ENCODE measurements at regions of chr6 and their contacts with region 1.

Region 1: DNA sequence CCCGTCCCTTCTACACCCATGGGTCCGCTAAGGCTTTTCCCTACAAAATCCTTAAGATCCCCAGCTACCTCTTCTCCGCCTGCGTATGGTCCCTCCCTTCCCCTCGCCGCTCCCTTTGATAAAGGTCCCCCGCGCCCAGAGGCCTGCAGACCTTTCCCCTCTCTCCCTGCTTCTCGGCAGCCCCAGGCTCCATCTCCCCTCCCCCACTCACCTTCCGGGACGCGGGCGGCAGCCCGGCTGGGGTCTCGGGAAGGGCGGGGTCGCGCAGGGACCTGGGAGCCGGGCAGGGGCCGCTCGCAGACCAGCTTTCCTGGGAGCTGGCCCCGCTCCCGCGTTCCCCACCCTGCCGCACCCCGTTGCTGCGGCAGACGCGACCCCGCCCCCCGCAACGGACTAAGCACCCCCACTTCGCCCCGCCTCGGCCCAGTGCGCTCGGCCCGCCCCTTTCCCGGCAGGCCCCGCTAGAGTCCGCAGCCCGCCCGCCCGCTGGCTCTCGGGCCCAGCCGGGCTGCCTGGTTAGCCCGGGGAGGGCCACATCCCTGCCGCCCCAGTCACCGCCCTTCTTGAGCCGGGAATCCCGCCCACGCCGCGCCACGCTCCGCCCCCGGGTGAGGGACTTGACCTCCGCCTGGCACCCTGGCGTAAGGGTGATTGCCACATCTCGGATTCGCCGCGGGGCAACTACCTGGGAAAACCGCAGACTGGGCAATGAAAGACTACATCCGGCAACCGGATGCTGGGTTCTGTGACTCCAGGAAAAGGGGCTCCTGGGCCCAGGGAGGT is at the start of gene FLOT1:
- DNase-seq: peak; percentile 99
- H3K4me3 Mint-ChIP-seq: peak within 1 kb of the TSS; percentile 91
- H3K27ac Mint-ChIP-seq: peak within 1 kb of the TSS; percentile 90
- H3K4me1 Mint-ChIP-seq: peaks cover 38% of the 10 kb centered on the region
- H3K27me3 Mint-ChIP-seq: no peaks in the 10 kb centered on the region
- CTCF ChIP-seq: no peak
- total RNA-seq, gene FLOT1: 61.8 and 73.7 TPM in 2 replicates

Region 2: DNA sequence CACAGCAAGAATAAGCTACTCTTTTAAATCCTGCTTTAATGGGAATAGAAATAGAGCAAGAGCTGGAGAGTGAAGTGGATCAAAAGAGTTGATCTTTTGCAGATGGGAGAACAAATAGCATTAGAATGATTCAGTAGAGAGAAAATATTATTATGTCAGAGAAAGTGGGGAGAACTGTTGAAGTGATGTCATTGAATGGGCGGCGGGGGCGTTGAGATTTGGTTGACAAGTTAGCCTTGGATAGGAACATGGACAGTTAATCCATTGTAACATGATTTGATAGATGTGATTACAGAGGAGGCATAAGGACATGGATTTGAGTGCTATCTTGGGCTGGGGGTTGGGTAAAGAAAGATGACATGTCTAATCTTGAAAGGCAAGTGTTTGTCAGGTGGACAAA is 106.7 kb before region 1 on chr6:
- CTCF ChIA-PET with region 1: no interaction called
- POLR2A ChIA-PET with region 1: no interaction called
- intact Hi-C with region 1: no loop called
- DNase-seq: no peak
- H3K4me3 Mint-ChIP-seq: no peak overlapping the region
- H3K27ac Mint-ChIP-seq: no peak overlapping the region
- H3K4me1 Mint-ChIP-seq: no peaks in the 10 kb centered on the region
- H3K27me3 Mint-ChIP-seq: no peaks in the 10 kb centered on the region
- CTCF ChIP-seq: no peak

Region 3: GRCh38 chr6:30686908-30687658 is 55.4 kb before region 1 on chr6:
- CTCF ChIA-PET with region 1: interaction called, 3 read pairs
- POLR2A ChIA-PET with region 1: interaction called, 12 read pairs
- intact Hi-C with region 1: no loop called
- DNase-seq: peak; percentile 96
- H3K4me3 Mint-ChIP-seq: peak overlapping the region; percentile 94
- H3K27ac Mint-ChIP-seq: peak overlapping the region; percentile 80
- H3K4me1 Mint-ChIP-seq: peaks cover 66% of the 10 kb centered on the region
- H3K27me3 Mint-ChIP-seq: no peaks in the 10 kb centered on the region
- CTCF ChIP-seq: no peak

Region 4: GRCh38 chr6:30769088-30769852 is 26.8 kb after region 1 on chr6:
- CTCF ChIA-PET with region 1: interaction called, 5 read pairs
- POLR2A ChIA-PET with region 1: interaction called, 21 read pairs
- intact Hi-C with region 1: no loop called
- DNase-seq: peak; percentile 94
- H3K4me3 Mint-ChIP-seq: peak overlapping the region; percentile 48
- H3K27ac Mint-ChIP-seq: peak overlapping the region; percentile 76
- H3K4me1 Mint-ChIP-seq: peaks cover 36% of the 10 kb centered on the region
- H3K27me3 Mint-ChIP-seq: no peaks in the 10 kb centered on the region
- CTCF ChIP-seq: no peak

Region 5: DNA sequence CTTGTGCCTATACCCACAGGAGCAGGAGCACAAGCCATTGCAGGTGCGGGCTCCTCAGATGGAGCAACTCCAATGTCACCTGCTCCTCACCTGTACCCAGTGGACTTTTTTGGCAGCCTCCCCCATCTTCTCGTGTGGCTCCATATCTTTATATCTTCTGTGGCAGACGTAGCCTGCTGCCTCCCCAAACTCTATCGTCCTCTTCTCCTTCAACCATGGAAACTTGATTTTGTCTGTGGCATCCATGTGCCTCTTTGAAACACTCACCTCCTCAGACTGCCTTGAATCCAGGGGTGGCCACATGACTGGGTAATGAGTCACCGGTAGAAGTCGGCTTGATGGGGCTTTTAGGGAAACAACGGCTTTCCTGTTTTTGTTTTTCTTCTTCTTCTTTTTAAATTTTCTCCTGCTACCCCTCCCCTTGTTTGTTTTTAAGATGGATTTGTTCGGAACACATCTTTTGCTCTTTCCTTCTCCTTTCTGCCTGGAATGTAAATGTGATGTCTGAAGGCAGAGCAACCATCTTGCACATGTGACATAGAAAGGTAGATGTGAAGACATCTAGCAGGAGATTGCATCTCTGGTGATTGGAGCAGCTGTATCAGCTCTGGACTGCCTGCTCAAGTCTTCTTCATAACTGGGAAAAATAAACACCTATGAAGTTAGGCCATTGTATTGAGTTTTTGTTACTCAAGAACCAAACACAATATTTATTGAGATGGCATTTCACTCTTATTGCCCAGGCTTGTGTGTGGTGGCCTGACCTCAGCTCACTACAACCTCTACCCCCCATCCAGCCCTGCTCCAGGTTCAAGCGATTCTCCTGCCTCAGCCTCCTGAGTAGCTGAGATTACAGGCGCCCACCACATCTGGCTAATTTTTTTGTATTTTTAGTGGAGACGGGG is 71.9 kb after region 1 on chr6:
- CTCF ChIA-PET with region 1: interaction called, 79 read pairs
- POLR2A ChIA-PET with region 1: interaction called, 159 read pairs
- intact Hi-C with region 1: no loop called
- DNase-seq: peak; percentile 88
- H3K4me3 Mint-ChIP-seq: no peak overlapping the region
- H3K27ac Mint-ChIP-seq: peak overlapping the region; percentile 92
- H3K4me1 Mint-ChIP-seq: peaks cover 39% of the 10 kb centered on the region
- H3K27me3 Mint-ChIP-seq: no peaks in the 10 kb centered on the region
- CTCF ChIP-seq: no peak

Region 6: DNA sequence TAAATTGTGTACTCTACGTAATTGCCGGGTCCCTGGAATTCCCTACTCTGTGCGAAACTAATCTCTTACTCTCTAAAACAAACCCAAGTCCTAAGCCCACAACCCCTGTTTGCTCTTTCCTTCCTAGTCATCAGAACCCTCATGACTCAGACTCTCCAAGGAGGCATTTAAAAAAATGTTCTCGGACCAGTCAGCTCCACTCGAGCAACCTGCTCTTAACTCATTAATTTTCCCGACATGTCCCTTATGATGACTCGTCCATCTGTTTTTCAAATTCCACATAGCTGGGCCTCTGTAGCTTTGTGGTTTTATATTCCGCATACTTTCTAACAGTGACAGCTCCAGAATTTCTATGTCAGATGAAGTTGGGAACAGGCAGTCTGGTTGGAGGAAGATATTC is 265.2 kb after region 1 on chr6:
- CTCF ChIA-PET with region 1: no interaction called
- POLR2A ChIA-PET with region 1: no interaction called
- intact Hi-C with region 1: no loop called
- DNase-seq: peak; percentile 49
- H3K4me3 Mint-ChIP-seq: no peak overlapping the region
- H3K27ac Mint-ChIP-seq: peak overlapping the region; percentile 73
- H3K4me1 Mint-ChIP-seq: peaks cover 50% of the 10 kb centered on the region
- H3K27me3 Mint-ChIP-seq: no peaks in the 10 kb centered on the region
- CTCF ChIP-seq: no peak

Region 7: DNA sequence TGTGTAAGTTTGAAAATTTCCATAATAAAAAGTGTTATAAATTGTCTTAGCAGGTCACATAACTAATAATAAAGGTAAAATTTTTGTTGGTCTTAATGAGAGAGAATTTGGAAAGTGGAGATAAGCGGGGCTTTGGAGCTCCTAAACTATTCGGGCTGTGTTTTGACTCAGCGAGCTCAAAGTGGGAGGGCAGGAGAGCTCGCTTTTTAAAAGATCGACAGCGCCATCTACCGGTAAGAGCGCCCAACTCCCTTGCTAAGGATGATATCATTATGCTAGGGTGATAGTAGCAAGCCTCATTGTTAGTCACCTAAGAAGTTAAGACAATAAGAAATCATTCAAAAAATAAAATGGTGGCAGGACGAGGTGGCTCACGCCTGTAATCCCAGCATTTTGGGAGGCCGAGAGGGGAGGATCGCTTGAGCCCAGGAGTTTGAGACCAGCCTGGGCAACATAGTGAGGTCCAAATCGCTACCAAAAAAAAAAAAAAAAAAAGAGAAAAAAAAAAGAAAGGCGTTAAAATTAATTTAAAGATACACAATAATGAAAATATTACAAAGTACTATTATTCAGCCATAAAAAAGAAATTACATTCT is 345.1 kb after region 1 on chr6:
- CTCF ChIA-PET with region 1: interaction called, 3 read pairs
- POLR2A ChIA-PET with region 1: no interaction called
- intact Hi-C with region 1: loop called (anchors 5 kb)
- DNase-seq: peak; percentile 91
- H3K4me3 Mint-ChIP-seq: no peak overlapping the region
- H3K27ac Mint-ChIP-seq: peak overlapping the region; percentile 16
- H3K4me1 Mint-ChIP-seq: peaks cover 21% of the 10 kb centered on the region
- H3K27me3 Mint-ChIP-seq: no peaks in the 10 kb centered on the region
- CTCF ChIP-seq: peak; percentile 65

Measured in MCF 10A (cell line).